ENCODE measurements at regions of chr10 and their contacts with region 1.

Region 1: GRCh38 chr10:17607603-17608332 is 9.4 kb downstream of the HACD1 start:
- DNase-seq: peak; percentile 40
- ATAC-seq: peak; percentile 93
- H3K4me3 ChIP-seq: no peak overlapping the region
- H3K27ac ChIP-seq: no peak overlapping the region
- H3K4me1 ChIP-seq: no peaks in the 10 kb centered on the region
- H3K27me3 ChIP-seq: no peaks in the 10 kb centered on the region
- CTCF ChIP-seq: peak; percentile 67 to 92 (median 85)
- POLR2A ChIP-seq: no peak
- RAD21 ChIP-seq: peak; percentile 95

Region 2: GRCh38 chr10:17624996-17625395 is 17.2 kb after region 1 on chr10:
- CTCF ChIA-PET with region 1: no interaction called
- POLR2A ChIA-PET with region 1: no interaction called
- RAD21 ChIA-PET with region 1: no interaction called
- intact Hi-C with region 1: no loop called
- DNase-seq: no peak
- ATAC-seq: no peak
- H3K4me3 ChIP-seq: no peak overlapping the region
- H3K27ac ChIP-seq: no peak overlapping the region
- H3K4me1 ChIP-seq: no peaks in the 10 kb centered on the region; a peak in 1 of 4 replicates
- H3K27me3 ChIP-seq: no peaks in the 10 kb centered on the region
- CTCF ChIP-seq: no peak
- POLR2A ChIP-seq: no peak
- RAD21 ChIP-seq: no peak

Region 3: DNA sequence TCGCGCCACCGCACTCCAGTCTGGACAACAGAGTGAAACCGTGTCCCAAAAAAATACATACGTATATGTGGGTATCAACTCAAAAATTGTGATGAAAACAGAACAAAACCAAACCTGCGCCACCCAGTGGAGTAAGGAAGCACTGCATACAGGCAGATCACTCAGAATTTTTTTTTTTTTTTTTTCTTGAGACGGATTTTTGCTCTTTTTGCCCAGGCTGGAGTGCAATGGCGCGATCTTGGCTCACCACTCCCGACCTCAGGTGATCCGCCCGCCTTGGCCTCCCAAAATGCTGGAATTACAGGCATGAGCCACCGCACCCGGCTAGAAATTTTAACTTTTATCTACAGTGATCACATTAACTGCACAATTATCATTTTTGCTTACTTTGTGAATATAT is 135.2 kb after region 1 on chr10:
- CTCF ChIA-PET with region 1: no interaction called
- POLR2A ChIA-PET with region 1: no interaction called
- RAD21 ChIA-PET with region 1: no interaction called
- intact Hi-C with region 1: loop called (anchors 1 kb)
- DNase-seq: peak; percentile 49
- ATAC-seq: peak; percentile 74
- H3K4me3 ChIP-seq: peak overlapping the region; percentile 9 to 28; a peak in 2 of 4 replicates
- H3K27ac ChIP-seq: no peak overlapping the region
- H3K4me1 ChIP-seq: peaks cover 0 to 10% of the 10 kb centered on the region in 2 experiments; a peak in 2 of 4 replicates
- H3K27me3 ChIP-seq: no peaks in the 10 kb centered on the region
- CTCF ChIP-seq: peak; percentile 59 to 78 (median 71); a peak in 5 of 6 replicates
- POLR2A ChIP-seq: no peak
- RAD21 ChIP-seq: peak; percentile 63

Region 4: GRCh38 chr10:17872191-17873091 is 264.7 kb after region 1 on chr10:
- CTCF ChIA-PET with region 1: interaction called, 4 read pairs
- POLR2A ChIA-PET with region 1: no interaction called
- RAD21 ChIA-PET with region 1: no interaction called
- intact Hi-C with region 1: loop called (anchors 1 kb)
- DNase-seq: peak; percentile 23
- ATAC-seq: peak; percentile 67
- H3K4me3 ChIP-seq: no peak overlapping the region
- H3K27ac ChIP-seq: no peak overlapping the region
- H3K4me1 ChIP-seq: no peaks in the 10 kb centered on the region
- H3K27me3 ChIP-seq: no peaks in the 10 kb centered on the region
- CTCF ChIP-seq: peak; percentile 54 to 67 (median 61); a peak in 5 of 6 replicates
- POLR2A ChIP-seq: no peak
- RAD21 ChIP-seq: peak; percentile 72

Region 5: DNA sequence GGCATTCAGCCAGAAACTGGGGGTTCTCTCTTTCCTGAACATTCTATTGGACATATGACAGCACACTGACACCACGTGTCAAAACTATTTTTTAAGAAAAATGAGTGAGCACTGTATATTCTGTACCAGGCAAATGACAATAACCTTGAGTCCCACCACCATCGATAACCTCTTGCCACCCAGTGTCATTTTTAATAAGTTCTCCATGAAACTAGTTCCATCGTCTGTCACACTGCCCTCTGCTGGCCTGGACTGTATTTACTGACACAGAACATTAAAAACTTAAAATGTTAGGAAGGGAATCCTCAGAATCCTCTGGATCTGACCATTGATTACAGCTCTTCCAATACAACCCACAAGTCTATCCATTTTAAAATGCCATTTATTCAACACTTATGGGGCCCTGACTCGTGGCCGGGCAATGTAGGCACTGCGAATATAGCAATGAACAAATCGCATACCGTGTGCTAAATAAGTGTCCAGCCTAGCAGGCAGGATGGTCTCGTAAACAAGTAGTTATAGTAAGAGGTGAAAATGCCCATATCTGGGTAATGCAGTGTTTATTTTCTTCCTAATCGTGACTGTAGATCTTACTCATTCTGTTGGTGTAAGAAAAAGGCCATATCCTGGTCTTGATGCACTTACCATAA is 496.6 kb after region 1 on chr10:
- CTCF ChIA-PET with region 1: no interaction called
- POLR2A ChIA-PET with region 1: no interaction called
- RAD21 ChIA-PET with region 1: no interaction called
- intact Hi-C with region 1: loop called (anchors 1 kb)
- DNase-seq: peak; percentile 28
- ATAC-seq: peak; percentile 58
- H3K4me3 ChIP-seq: no peak overlapping the region
- H3K27ac ChIP-seq: no peak overlapping the region
- H3K4me1 ChIP-seq: no peaks in the 10 kb centered on the region
- H3K27me3 ChIP-seq: peaks cover 5% of the 10 kb centered on the region; the same call in 1 of the 2 replicates
- CTCF ChIP-seq: peak; percentile 58 to 81 (median 67); a peak in 5 of 6 replicates
- POLR2A ChIP-seq: no peak
- RAD21 ChIP-seq: peak; percentile 53

Region 6: DNA sequence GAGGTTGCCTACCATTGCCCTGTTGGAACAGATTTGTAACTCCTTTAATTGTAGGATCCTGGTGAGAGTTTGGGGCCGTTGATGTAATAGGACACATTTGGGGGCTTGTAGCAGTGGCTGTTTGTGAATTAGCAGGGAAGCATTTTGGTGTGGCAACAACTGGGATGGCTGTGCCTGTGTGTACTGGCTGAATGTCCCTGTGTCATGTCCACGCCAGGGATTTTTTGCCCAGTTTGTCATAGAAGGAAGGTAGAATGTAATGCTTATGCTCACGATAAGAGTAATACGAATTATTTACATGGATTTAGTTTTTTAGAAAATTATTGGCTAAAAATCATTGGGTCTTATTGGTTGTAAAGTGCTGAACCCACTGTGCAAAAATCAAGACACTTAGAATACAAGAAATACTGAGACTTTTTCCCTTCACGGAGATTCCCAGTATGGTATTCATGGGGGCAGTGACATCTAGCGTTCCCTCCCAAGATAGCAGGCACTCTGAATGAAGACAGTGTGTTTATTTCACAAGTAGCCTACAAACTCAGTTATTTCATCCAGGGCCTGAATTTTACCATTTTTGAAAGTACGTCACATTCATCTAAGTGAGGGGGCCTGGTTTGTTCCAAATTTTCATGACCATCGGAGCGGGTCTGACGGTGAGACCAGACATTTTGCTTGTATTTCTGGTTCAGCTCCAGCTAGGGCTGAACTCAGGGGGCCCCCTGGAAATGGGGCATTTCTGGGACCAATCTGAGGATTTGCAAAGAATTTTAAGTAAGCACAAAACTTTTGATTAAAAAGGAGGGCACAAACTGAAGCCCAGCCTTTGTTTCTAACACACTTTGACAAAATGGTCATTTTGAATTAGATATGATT is 607.2 kb after region 1 on chr10:
- CTCF ChIA-PET with region 1: no interaction called
- POLR2A ChIA-PET with region 1: no interaction called
- RAD21 ChIA-PET with region 1: interaction called in 1 of 2 experiments, 4 read pairs
- intact Hi-C with region 1: loop called (anchors 5 kb)
- DNase-seq: no peak
- ATAC-seq: peak; percentile 87
- H3K4me3 ChIP-seq: no peak overlapping the region
- H3K27ac ChIP-seq: no peak overlapping the region
- H3K4me1 ChIP-seq: no peaks in the 10 kb centered on the region
- H3K27me3 ChIP-seq: no peaks in the 10 kb centered on the region
- CTCF ChIP-seq: peak; percentile 59 to 86 (median 82); a peak in 5 of 6 replicates
- POLR2A ChIP-seq: no peak
- RAD21 ChIP-seq: peak; percentile 77

Region 7: GRCh38 chr10:18238870-18239485 is 631.2 kb after region 1 on chr10:
- CTCF ChIA-PET with region 1: no interaction called
- POLR2A ChIA-PET with region 1: no interaction called
- RAD21 ChIA-PET with region 1: no interaction called
- intact Hi-C with region 1: loop called (anchors 2 kb)
- DNase-seq: peak; percentile 34
- ATAC-seq: peak; percentile 65
- H3K4me3 ChIP-seq: no peak overlapping the region
- H3K27ac ChIP-seq: no peak overlapping the region
- H3K4me1 ChIP-seq: no peaks in the 10 kb centered on the region
- H3K27me3 ChIP-seq: peaks cover 9% of the 10 kb centered on the region; the same call in 1 of the 2 replicates
- CTCF ChIP-seq: peak; percentile 59 to 71 (median 70); a peak in 5 of 6 replicates
- POLR2A ChIP-seq: no peak
- RAD21 ChIP-seq: peak; percentile 70